Transverse colon (tissue), 4 donors: ENCODE measurements at regions of chr12 and their contacts with region 1.

Region 1: DNA sequence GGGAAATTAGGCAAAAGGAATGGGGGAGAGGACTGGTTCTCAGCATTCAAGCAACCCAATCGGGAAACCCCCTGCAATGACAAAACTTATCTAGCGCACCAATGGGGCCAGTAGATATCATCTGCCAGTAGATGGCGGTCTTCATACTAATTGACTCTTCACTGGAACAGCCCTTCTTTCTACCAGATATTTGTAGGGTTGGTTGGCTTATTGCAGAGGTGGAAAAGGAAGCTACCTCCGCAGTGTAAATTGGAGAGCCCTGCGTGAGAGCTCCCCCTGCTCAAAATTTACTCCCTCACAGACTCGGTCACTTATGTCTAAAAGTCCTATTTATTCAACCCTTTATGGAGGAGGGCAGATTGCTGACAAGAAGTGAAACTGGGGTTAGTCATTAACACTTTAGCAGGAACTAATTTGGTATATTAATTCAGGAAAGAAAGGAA is 166.1 kb upstream of the CCND2 start:
- DNase-seq: peak; percentile 55
- H3K4me3 ChIP-seq: no peak overlapping the region
- H3K27ac ChIP-seq: no peak overlapping the region
- H3K4me1 ChIP-seq: peaks cover 0 to 6% (median 0%) of the 10 kb centered on the region in 4 donors
- H3K27me3 ChIP-seq: no peaks in the 10 kb centered on the region
- CTCF ChIP-seq: peak; percentile 65 to 74 (median 68)
- EP300 ChIP-seq: no peak
- POLR2A ChIP-seq: no peak

Region 2: GRCh38 chr12:3680896-3681594 is 426.4 kb before region 1 on chr12:
- in situ Hi-C with region 1: no loop called
- intact Hi-C with region 1: no loop called
- DNase-seq: peak; percentile 67
- H3K4me3 ChIP-seq: no peak overlapping the region
- H3K27ac ChIP-seq: peak overlapping the region in 1 of 4 donors; percentile 5
- H3K4me1 ChIP-seq: peaks cover 0 to 13% (median 10%) of the 10 kb centered on the region in 4 donors
- H3K27me3 ChIP-seq: no peaks in the 10 kb centered on the region
- CTCF ChIP-seq: no peak
- EP300 ChIP-seq: no peak
- POLR2A ChIP-seq: no peak

Region 3: DNA sequence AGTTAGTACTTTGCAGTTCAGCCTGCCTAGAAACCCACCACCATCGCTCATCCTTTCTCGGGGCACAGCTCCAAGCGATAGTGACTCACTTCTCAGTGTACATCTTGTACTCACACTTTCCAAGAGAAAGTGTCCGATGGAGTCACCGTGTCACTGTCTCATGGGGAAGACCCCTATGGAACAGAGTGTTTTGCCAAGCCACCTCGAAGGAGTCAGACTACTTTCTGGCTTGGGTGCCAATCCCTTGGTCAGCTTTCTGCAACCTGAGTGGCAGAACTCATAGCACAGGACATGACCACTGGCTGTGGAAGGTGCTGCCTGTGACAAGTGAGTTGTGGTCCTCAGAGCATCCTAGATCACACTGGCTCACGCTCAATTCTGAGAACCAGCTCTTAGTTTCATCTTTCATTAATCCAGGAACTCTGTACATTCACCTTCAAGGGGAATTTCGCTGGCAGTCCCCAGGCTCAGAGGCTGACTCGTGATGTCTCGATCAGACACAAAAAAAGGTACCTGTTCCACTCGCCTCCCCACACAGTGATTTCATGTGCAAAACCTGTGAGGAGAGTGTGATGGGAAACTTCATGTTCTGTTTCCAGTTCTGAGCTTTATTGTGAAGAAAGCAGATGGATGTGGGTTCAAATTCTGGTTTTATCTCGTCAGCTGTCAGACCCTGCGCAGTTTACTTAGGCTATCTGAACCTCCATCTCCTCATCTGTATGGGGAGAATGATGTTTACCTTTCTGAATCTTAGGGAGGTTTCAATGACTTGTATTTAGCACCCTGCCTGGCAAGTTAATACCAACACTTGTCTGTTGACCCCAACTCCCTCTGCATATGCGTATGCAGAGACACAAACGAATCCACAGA is 38.8 kb after region 1 on chr12:
- in situ Hi-C with region 1: no loop called
- intact Hi-C with region 1: loop called (anchors 1 kb)
- DNase-seq: no peak
- H3K4me3 ChIP-seq: no peak overlapping the region
- H3K27ac ChIP-seq: no peak overlapping the region
- H3K4me1 ChIP-seq: peaks cover 0 to 20% (median 2%) of the 10 kb centered on the region in 4 donors
- H3K27me3 ChIP-seq: no peaks in the 10 kb centered on the region
- CTCF ChIP-seq: no peak
- EP300 ChIP-seq: no peak
- POLR2A ChIP-seq: no peak